Naive thymus-derived CD8-positive, alpha-beta T cell (primary cell): ENCODE measurements at regions of chr1 and their contacts with region 1.

Region 1: DNA sequence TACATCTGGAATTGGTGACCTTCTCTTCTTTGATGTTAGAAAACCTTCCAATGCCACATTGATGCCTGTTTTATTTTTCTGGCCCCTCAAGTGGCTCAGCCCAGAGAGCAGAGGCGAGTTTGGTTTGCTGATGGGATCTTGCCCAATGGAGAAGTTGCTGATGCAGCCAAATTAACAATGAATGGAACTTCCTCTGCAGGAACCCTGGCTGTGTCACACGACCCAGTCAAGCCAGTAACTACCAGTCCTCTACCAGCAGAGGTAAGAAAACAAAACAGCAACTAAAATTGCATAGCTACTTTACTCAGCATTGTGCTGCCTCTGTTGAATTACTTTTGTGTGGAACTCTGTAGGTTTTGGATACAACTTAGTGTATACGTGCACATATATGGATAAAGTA is 97.6 kb downstream of the CC2D1B start:
- DNase-seq: no peak
- ATAC-seq: no peak
- H3K4me3 Mint-ChIP-seq: no peak overlapping the region
- H3K27ac Mint-ChIP-seq: no peak overlapping the region
- H3K4me1 Mint-ChIP-seq: peaks cover 0 to 2% (median 0%) of the 10 kb centered on the region in 4 donors
- H3K27me3 Mint-ChIP-seq: peaks cover 0 to 11% (median 0%) of the 10 kb centered on the region in 5 donors

Region 2: GRCh38 chr1:52683367-52683940 is 415.1 kb after region 1 on chr1:
- POLR2A ChIA-PET with region 1: interaction called, 10 read pairs
- DNase-seq: no peak
- ATAC-seq: no peak
- H3K4me3 Mint-ChIP-seq: no peak overlapping the region
- H3K27ac Mint-ChIP-seq: peak overlapping the region in 5 of 10 donors; percentile 32 to 73 (median 58)
- H3K4me1 Mint-ChIP-seq: peaks cover 8 to 17% (median 10%) of the 10 kb centered on the region in 4 donors
- H3K27me3 Mint-ChIP-seq: no peaks in the 10 kb centered on the region